H1 (cell line): ENCODE measurements at regions of chr20 and their contacts with region 1.

Region 1: DNA sequence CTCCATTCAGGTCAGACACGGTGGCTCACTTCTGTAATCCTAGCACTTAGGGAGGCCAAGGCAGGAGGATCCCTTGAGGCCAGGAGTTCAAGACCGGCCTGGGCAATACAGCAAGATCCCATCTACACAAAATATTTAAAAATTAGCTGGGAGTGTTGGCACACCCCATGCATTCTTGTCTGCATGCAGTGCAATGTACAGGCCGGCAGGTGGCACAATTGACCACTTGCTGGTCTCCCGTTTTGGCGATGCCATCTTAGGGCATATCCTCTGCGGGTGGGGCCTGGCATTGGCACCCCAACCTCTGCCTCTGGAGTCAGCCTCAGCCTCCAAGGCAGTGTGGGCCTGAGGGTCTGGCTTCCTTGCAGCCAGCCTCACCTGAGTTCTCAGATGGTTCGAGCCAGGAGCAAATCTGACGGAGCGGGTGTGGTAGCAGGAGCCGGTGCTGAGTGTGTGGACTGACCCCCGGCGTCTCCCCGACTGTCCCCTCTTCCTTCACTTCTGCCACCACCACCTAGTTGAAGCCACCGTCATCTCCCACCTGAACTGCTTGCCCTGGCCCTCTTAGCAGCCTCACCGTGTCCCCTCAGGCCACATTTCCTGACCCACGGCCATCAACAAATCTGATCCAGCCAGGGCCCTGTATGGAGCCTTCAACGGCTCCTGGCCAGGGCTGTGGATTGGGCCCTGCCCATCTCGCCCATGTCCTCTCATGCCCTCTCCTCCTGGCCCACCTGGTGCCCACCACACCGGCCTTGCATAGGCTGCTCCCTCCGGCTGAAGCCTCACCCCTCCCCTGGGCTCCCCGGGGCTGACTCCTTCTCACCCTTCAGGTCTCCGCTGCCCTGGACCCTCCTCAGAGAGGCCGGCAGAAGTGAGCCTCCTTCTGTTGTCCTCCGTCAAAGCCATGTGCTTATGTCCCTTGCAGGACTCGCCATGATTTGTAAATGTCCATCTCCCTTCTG is 44.0 kb downstream of the EFCAB8 start:
- DNase-seq: peak in 1 of 2 experiments; percentile 72
- H3K4me3 ChIP-seq: no peak overlapping the region
- H3K27ac ChIP-seq: no peak overlapping the region
- H3K4me1 ChIP-seq: no peaks in the 10 kb centered on the region
- H3K27me3 ChIP-seq: no peaks in the 10 kb centered on the region
- CTCF ChIP-seq: peak; percentile 93 to 97 (median 95)
- EP300 ChIP-seq: no peak
- POLR2A ChIP-seq: no peak
- RAD21 ChIP-seq: peak; percentile 94 to 95

Region 2: DNA sequence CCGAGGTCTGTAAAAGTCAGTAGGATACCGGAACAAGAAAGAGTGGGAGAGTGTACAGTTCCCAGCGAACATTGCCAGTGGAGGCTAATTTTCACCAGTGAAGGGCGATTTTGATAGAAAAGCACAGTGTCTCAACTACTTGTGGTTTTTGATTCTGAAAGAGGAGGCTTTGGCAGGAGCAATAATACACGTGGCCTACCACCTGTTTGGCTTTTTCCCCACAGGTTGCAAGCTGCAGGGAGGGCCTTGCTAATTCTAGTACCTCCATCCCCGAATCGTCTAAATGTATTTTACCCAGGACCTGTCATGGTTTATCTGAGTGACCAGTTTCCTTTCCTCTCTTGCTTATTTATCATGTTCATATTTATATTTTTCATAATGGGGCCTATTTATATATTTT is 47.4 kb before region 1 on chr20:
- CTCF ChIA-PET with region 1: no interaction called
- POLR2A ChIA-PET with region 1: no interaction called
- DNase-seq: no peak
- H3K4me3 ChIP-seq: no peak overlapping the region
- H3K27ac ChIP-seq: no peak overlapping the region
- H3K4me1 ChIP-seq: peaks cover 9 to 17% (median 11%) of the 10 kb centered on the region in 4 experiments; a peak in 6 of 7 replicates
- H3K27me3 ChIP-seq: no peaks in the 10 kb centered on the region
- CTCF ChIP-seq: no peak
- EP300 ChIP-seq: no peak
- POLR2A ChIP-seq: no peak
- RAD21 ChIP-seq: no peak

Region 3: GRCh38 chr20:32888636-32889035 is 14.1 kb before region 1 on chr20:
- CTCF ChIA-PET with region 1: interaction called, 15 read pairs
- POLR2A ChIA-PET with region 1: no interaction called
- DNase-seq: no peak
- H3K4me3 ChIP-seq: no peak overlapping the region
- H3K27ac ChIP-seq: no peak overlapping the region
- H3K4me1 ChIP-seq: peaks cover 0 to 10% (median 3%) of the 10 kb centered on the region in 4 experiments; a peak in 5 of 7 replicates
- H3K27me3 ChIP-seq: no peaks in the 10 kb centered on the region
- CTCF ChIP-seq: no peak
- EP300 ChIP-seq: no peak
- POLR2A ChIP-seq: no peak
- RAD21 ChIP-seq: no peak

Region 4: DNA sequence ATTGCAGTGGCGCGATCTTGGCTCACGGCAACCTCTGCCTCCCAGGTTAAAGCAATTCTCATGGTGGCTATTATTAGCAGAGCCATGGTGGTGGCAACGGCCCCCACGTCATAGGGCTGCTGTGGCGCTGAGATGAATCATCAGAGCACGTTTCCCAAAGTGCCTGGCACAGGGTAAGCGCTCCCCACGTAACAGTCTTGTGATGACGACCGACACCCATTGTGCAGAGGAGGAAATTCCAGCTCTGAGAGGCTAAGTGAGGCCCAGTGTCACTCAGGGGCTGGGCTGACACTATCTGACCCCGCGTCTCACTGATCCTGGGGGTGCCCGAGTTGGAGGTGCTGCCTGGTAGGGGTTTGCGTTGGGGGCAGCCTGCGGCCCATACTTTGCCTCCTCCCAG is 85.3 kb after region 1 on chr20:
- CTCF ChIA-PET with region 1: interaction called, 15 read pairs
- POLR2A ChIA-PET with region 1: no interaction called
- DNase-seq: no peak
- H3K4me3 ChIP-seq: no peak overlapping the region
- H3K27ac ChIP-seq: no peak overlapping the region
- H3K4me1 ChIP-seq: no peaks in the 10 kb centered on the region; a peak in 1 of 7 replicates
- H3K27me3 ChIP-seq: no peaks in the 10 kb centered on the region
- CTCF ChIP-seq: no peak
- EP300 ChIP-seq: no peak
- POLR2A ChIP-seq: no peak
- RAD21 ChIP-seq: no peak

Region 5: DNA sequence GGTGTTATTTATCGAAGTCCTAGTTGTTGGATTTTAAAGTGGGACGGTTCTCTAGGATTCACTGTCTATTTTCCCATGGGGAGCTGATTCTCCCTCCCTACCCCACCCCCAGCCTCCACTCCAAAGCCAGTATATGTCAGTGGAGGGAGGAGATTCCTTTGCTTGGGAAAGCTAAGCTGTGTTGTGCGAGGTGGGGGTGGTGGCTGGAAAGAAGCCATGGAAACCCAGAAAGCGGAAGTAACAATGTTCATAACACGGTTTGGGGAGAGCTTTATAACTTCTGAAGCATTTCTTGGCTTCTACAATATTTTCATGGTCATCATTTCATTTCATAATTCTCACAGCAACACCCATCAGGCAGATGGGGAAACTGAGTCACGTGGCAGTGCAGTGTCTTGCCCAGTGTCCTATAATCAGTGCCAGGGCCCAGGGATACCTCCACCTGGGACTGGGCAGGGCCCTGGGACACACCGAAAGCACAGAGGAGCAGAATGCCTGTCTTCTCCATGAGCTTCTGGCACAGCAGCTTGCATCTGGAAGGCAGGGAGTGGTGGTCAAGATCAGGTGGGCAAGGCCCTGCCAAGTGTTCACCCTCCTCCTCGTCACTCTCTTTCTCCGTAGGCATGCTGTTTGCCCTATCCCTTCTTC is 97.0 kb after region 1 on chr20:
- CTCF ChIA-PET with region 1: interaction called, 36 read pairs
- POLR2A ChIA-PET with region 1: no interaction called
- DNase-seq: no peak
- H3K4me3 ChIP-seq: no peak overlapping the region
- H3K27ac ChIP-seq: no peak overlapping the region
- H3K4me1 ChIP-seq: no peaks in the 10 kb centered on the region; a peak in 1 of 7 replicates
- H3K27me3 ChIP-seq: no peaks in the 10 kb centered on the region
- CTCF ChIP-seq: no peak
- EP300 ChIP-seq: no peak
- POLR2A ChIP-seq: no peak
- RAD21 ChIP-seq: no peak

Region 6: GRCh38 chr20:33046412-33046811 is 143.7 kb after region 1 on chr20:
- CTCF ChIA-PET with region 1: no interaction called
- POLR2A ChIA-PET with region 1: no interaction called
- DNase-seq: no peak
- H3K4me3 ChIP-seq: no peak overlapping the region
- H3K27ac ChIP-seq: no peak overlapping the region
- H3K4me1 ChIP-seq: no peaks in the 10 kb centered on the region
- H3K27me3 ChIP-seq: no peaks in the 10 kb centered on the region
- CTCF ChIP-seq: no peak
- EP300 ChIP-seq: no peak
- POLR2A ChIP-seq: no peak
- RAD21 ChIP-seq: no peak